Mucosa of descending colon (tissue), 3 donors: ENCODE measurements at regions of chr7 and their contacts with region 1.

Region 1: DNA sequence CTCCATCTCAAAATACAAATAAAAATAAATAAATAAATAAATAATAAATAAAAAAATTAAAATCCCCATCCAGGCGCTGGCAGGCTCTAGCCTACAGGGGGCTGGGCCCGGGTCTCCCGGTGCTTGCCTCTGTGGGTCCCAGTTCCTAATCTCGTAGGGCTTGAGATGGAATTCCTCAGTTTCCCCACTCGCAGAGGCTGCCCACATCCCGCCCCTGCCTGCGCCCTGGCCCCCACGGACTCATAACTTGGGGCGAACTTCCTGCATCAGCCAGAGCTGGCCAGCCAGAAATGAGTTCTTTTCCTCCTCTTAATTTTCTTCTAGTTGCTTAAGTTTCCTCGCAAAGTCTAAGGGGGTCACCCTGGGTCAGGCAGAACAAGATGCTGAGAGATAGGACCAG is 22.0 kb upstream of the SRRM3 start:
- DNase-seq: no peak
- ATAC-seq: no peak
- H3K4me3 ChIP-seq: no peak overlapping the region
- H3K4me1 ChIP-seq: no peaks in the 10 kb centered on the region
- CTCF ChIP-seq: no peak

Region 2: DNA sequence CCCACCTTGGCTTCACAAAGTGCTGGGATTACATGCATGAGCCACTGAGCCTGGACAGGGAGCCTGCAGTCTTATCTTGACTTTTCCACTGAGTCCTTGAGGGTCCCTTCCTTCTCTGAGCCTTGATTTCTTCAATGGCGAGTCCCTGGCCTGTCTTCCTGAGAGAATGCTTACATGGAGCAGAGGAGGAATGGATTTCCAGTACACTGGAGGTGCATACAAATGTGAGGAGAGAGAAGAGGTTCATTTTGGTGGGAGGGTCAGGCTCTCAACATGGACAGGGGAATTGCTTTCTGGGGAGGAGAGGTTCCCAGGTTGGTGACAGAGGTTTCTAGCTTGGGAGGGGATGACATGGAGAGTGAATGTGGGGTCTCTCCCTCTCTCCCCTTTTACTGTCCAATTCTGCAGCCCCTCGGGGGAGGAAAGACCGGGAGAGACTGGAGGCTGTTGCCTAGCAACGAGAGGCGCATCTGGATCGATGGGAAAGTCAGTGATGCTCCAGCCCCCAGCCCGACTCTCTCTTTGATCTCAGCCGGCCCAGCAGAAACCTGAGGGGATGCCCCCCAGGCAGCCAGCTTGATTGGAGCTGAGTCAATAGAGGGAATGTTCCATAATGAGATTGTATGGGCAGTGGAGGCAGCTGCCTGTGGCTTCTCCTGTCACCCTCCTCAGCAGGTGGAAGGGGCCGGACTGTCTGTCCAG is 36.8 kb after region 1 on chr7:
- intact Hi-C with region 1: no loop called
- DNase-seq: no peak
- ATAC-seq: no peak
- H3K4me3 ChIP-seq: no peak overlapping the region
- H3K4me1 ChIP-seq: no peaks in the 10 kb centered on the region
- CTCF ChIP-seq: no peak

Region 3: DNA sequence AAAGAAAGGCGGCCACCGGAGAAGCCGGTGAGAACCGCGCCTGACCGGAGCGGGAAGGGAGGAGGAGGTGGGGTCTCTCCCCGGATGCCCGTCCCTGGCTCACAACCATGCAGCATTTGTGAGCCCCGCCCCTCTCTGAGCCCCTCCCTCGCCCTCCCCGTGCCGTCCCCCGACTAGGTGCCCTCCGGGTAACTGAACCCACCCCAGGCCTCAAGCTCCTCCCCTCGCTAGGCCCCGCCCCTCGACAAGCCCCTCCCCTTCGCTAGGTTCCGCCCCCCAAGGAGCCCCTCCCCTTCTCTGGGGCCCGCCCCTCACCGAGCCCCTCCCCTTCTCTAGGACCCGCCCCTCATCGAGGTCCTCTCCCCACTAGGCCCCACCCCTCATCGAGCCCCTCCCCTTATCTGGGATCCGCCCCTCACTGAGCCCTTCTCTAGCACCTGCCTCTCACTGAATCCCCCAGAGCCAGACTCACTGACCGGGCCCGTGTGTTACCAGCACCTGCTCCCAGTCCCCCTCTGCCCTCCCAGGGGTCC is 80.6 kb after region 1 on chr7:
- intact Hi-C with region 1: no loop called
- DNase-seq: no peak
- ATAC-seq: peak; percentile 78
- H3K4me3 ChIP-seq: no peak overlapping the region
- H3K4me1 ChIP-seq: peaks cover 7% of the 10 kb centered on the region
- CTCF ChIP-seq: no peak

Region 4: GRCh38 chr7:76314042-76314721 is 134.5 kb after region 1 on chr7:
- intact Hi-C with region 1: loop called (anchors 10 kb)
- DNase-seq: peak; percentile 96 to 99 (median 99)
- ATAC-seq: peak; percentile 81
- H3K4me3 ChIP-seq: no peak overlapping the region
- H3K4me1 ChIP-seq: peaks cover 13% of the 10 kb centered on the region
- CTCF ChIP-seq: peak; percentile 99